H1 (cell line): ENCODE measurements at regions of chr3 and their contacts with region 1.

Region 1: DNA sequence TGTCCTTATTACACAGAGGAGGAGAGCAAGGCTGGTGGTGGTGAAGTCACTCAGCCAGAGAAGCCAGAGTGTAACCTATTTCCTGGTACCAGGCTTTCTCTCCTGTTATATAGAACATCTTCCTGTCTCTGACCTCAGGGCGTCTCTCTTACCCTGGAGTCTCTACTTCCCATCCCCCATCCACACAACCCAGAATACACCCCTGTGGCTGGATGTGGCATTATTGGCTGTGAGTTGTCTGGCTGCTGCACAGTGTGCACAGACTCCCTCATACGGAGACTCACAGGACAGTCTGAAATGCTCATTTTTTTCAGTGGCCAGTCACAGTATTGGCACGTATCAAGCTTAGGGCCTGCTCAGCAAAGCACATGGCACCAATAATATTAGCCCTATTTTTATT is 8.6 kb downstream of the PODXL2 start:
- DNase-seq: no peak
- H3K4me3 ChIP-seq: no peak overlapping the region
- H3K27ac ChIP-seq: no peak overlapping the region
- H3K4me1 ChIP-seq: no peaks in the 10 kb centered on the region; a peak in 1 of 7 replicates
- H3K27me3 ChIP-seq: no peaks in the 10 kb centered on the region
- CTCF ChIP-seq: no peak
- EP300 ChIP-seq: no peak
- POLR2A ChIP-seq: no peak
- RAD21 ChIP-seq: no peak

Region 2: GRCh38 chr3:127525373-127525772 is 112.2 kb before region 1 on chr3:
- CTCF ChIA-PET with region 1: no interaction called
- POLR2A ChIA-PET with region 1: no interaction called
- DNase-seq: no peak
- H3K4me3 ChIP-seq: no peak overlapping the region
- H3K27ac ChIP-seq: no peak overlapping the region
- H3K4me1 ChIP-seq: no peaks in the 10 kb centered on the region
- H3K27me3 ChIP-seq: no peaks in the 10 kb centered on the region
- CTCF ChIP-seq: no peak
- EP300 ChIP-seq: no peak
- POLR2A ChIP-seq: no peak
- RAD21 ChIP-seq: no peak

Region 3: DNA sequence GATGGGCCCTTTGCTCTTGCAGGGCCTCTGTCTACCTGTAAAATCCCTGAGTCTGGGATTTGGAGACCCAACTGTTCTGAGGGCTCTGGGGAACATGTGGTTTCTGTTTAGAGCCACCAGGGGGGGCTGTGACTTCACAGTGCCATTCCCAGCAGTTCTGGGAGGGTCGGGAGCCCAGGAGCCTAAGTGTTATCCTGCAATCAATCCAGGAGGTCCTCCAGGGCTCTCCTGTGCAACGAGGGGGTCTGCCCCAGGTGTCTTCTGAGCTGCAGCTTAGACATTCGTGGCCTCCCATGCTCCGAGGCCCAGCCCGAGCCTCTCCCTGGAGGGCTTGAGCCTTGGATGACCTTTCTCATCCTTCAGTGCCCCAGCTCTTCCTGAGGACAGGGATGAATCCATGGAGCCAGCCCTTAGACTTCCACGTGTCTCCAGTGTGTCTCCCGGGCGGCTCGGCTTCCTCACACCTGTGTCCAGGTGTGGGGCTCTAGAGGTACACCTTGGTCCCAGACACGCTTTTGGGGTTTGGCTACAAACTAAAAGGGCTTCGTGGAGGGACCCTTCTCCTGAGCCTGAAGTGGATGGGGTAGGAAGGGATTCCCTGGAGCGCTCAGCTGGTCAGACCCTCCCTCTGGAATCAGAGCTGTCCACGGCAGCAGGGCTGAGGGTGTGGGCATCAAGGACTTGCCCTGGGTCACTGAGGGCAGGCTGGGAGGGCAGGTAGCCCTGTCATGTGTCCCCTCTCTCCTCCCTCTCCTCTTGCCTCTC is 14.9 kb after region 1 on chr3:
- CTCF ChIA-PET with region 1: interaction called, 15 read pairs
- POLR2A ChIA-PET with region 1: interaction called, 3 read pairs
- DNase-seq: peak in 1 of 2 experiments; percentile 72
- H3K4me3 ChIP-seq: no peak overlapping the region
- H3K27ac ChIP-seq: no peak overlapping the region
- H3K4me1 ChIP-seq: no peaks in the 10 kb centered on the region
- H3K27me3 ChIP-seq: no peaks in the 10 kb centered on the region
- CTCF ChIP-seq: peak; percentile 68 to 91 (median 88)
- EP300 ChIP-seq: no peak
- POLR2A ChIP-seq: no peak
- RAD21 ChIP-seq: peak; percentile 89 to 93

Region 4: DNA sequence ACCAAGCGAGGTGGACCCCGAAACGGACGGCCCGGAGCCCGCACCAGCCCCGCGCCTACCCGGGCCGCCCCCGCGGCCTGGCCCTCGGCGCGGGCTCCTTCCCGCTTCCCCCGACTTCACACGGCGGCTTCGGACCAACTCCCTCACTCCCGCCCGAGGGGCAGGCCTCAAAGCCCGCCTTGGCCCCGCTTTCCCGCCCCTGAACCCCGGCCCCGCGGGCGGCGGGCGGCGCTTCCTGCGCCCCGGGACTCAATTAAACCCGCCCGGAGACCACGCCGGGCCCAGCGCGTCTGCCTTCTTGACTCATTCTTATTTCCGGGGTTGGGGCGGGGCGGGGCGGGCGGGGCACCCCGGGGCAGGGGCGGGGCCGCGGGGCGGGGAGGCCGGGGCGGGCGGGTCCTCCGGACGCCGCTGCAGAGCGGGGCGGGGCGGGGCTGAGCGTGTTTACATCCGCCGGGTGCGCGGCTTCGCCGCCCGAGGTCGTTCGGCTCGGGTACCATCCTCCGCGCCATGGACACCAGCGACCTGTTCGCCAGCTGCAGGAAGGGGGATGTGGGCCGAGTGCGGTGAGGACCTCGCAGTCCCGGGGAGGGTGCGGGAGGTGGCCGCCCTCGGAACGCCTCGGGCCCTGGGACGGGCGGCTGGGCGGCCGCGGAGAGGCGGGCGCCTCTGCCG is 35.1 kb after region 1 on chr3 and contains the start of gene ABTB1:
- CTCF ChIA-PET with region 1: no interaction called
- POLR2A ChIA-PET with region 1: no interaction called
- DNase-seq: peak in 1 of 2 experiments; percentile 87
- H3K4me3 ChIP-seq: peak within 1 kb of the TSS; percentile 58 to 98 (median 78)
- H3K27ac ChIP-seq: peak within 1 kb of the TSS; percentile 52; the same call in 1 of the 2 replicates
- H3K4me1 ChIP-seq: peaks cover 0 to 14% (median 10%) of the 10 kb centered on the region in 4 experiments; a peak in 6 of 7 replicates
- H3K27me3 ChIP-seq: no peaks in the 10 kb centered on the region; a peak in 2 of 7 replicates
- CTCF ChIP-seq: no peak
- EP300 ChIP-seq: no peak
- POLR2A ChIP-seq: peak in 1 of 2 experiments; percentile 71; a peak in 2 of 3 replicates
- RAD21 ChIP-seq: no peak
- total RNA-seq, gene ABTB1: 7.0 and 9.4 TPM in 2 replicates

Region 5: GRCh38 chr3:127822698-127823425 is 185.3 kb after region 1 on chr3:
- CTCF ChIA-PET with region 1: no interaction called
- POLR2A ChIA-PET with region 1: no interaction called
- DNase-seq: peak in 1 of 2 experiments; percentile 60
- H3K4me3 ChIP-seq: peak overlapping the region; percentile 56 to 75 (median 64)
- H3K27ac ChIP-seq: no peak overlapping the region
- H3K4me1 ChIP-seq: peaks cover 0 to 10% (median 1%) of the 10 kb centered on the region in 4 experiments; a peak in 6 of 7 replicates
- H3K27me3 ChIP-seq: peaks cover 11 to 31% (median 25%) of the 10 kb centered on the region in 4 experiments; a peak in 6 of 7 replicates
- CTCF ChIP-seq: no peak
- EP300 ChIP-seq: no peak
- POLR2A ChIP-seq: no peak
- RAD21 ChIP-seq: no peak

Region 6: GRCh38 chr3:128041344-128041743 is 403.8 kb after region 1 on chr3:
- CTCF ChIA-PET with region 1: no interaction called
- POLR2A ChIA-PET with region 1: no interaction called
- DNase-seq: peak in 1 of 2 experiments; percentile 16
- H3K4me3 ChIP-seq: no peak overlapping the region
- H3K27ac ChIP-seq: no peak overlapping the region
- H3K4me1 ChIP-seq: no peaks in the 10 kb centered on the region
- H3K27me3 ChIP-seq: peaks cover 0 to 1% (median 0%) of the 10 kb centered on the region in 4 experiments; a peak in 1 of 7 replicates
- CTCF ChIP-seq: no peak
- EP300 ChIP-seq: no peak
- POLR2A ChIP-seq: no peak
- RAD21 ChIP-seq: no peak